Left cardiac atrium (tissue), 4 donors: ENCODE measurements at regions of chr9 and their contacts with region 1.

Region 1: GRCh38 chr9:100129772-100130171 is 30.7 kb downstream of the INVS start:
- DNase-seq: no peak
- ATAC-seq: no peak

Region 2: DNA sequence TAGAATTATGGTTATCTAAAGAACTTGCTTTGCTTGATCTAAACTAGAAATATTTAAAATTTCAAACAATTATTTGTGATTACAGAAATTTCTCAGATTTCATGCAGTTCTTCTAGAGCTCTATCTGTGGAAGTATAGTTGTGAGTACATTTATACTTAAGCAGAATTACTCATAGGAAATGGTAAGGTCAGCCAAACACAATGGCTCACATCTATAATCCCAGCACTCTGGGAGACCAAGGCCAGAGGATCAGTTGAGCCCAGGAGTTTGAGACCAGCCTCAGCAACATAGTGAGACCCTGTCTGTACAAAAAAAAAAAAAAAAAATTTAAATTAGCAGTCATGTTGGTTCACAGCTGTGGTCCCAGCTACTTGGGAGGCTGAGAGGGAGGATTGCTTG is 40.3 kb after region 1 on chr9:
- intact Hi-C with region 1: loop called in 1 of 2 experiments (anchors 10 kb)
- DNase-seq: no peak
- ATAC-seq: no peak